ENCODE measurements at regions of chr15 and their contacts with region 1.

Region 1: GRCh38 chr15:41557673-41558399 is 1.2 kb upstream of the TYRO3 start:
- DNase-seq: peak; percentile 76 to 87
- ATAC-seq: peak; percentile 84 to 92 (median 90)
- H3K4me3 ChIP-seq: no peak overlapping the region
- H3K4me3 Mint-ChIP-seq: peak overlapping the region; percentile 94
- H3K27ac ChIP-seq: peak overlapping the region; percentile 10
- H3K27ac Mint-ChIP-seq: peak overlapping the region; percentile 90 to 95
- H3K4me1 ChIP-seq: peaks cover 21% of the 10 kb centered on the region
- H3K4me1 Mint-ChIP-seq: peaks cover 11 to 26% of the 10 kb centered on the region in 2 donors
- H3K27me3 ChIP-seq: peaks cover 23% of the 10 kb centered on the region
- H3K27me3 Mint-ChIP-seq: peaks cover 0 to 26% of the 10 kb centered on the region in 2 donors
- CTCF ChIP-seq: peak; percentile 97

Region 2: DNA sequence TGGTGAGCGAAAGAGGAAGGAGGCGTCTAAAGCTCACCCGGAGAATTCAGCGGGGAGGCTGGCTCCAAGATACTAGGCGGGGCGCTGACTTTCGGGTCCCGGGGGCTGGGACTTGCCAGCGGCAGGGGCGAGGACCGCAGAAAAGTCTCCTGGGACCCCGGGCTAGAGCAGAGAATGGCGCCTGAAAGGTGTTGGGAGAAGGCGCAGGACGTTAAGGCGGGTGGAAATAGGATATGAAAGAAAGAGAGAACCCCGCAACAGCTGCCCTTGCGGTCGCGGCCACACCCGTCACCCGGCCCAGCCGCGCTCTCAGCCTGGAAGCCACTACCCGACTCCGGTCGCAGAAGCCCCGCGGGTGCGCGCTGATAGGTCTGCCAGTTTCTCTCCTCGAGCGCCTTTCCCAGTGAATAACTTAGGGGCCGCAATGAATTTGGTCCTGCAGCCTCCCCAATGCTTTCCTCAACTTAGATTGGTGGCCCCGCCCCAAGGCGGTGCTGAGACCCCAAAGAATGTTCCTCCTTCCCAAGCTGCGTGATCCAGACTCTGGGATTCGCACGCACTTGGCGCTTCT is 44.8 kb before region 1 on chr15:
- intact Hi-C with region 1: no loop called
- DNase-seq: peak; percentile 34 to 58
- ATAC-seq: peak; percentile 27 to 59 (median 46)
- H3K4me3 ChIP-seq: peak overlapping the region; percentile 27
- H3K4me3 Mint-ChIP-seq: peak overlapping the region; percentile 86
- H3K27ac ChIP-seq: no peak overlapping the region
- H3K27ac Mint-ChIP-seq: peak overlapping the region in 1 of 2 donors; percentile 66
- H3K4me1 ChIP-seq: peaks cover 34% of the 10 kb centered on the region
- H3K4me1 Mint-ChIP-seq: peaks cover 25 to 26% of the 10 kb centered on the region in 2 donors
- H3K27me3 ChIP-seq: peaks cover 16% of the 10 kb centered on the region
- H3K27me3 Mint-ChIP-seq: peaks cover 0 to 19% of the 10 kb centered on the region in 2 donors
- CTCF ChIP-seq: no peak

Region 3: GRCh38 chr15:41523097-41523496 is 34.7 kb before region 1 on chr15:
- intact Hi-C with region 1: no loop called
- DNase-seq: no peak
- ATAC-seq: no peak
- H3K4me3 ChIP-seq: no peak overlapping the region
- H3K4me3 Mint-ChIP-seq: no peak overlapping the region
- H3K27ac ChIP-seq: no peak overlapping the region
- H3K27ac Mint-ChIP-seq: no peak overlapping the region
- H3K4me1 ChIP-seq: no peaks in the 10 kb centered on the region
- H3K4me1 Mint-ChIP-seq: no peaks in the 10 kb centered on the region
- H3K27me3 ChIP-seq: no peaks in the 10 kb centered on the region
- H3K27me3 Mint-ChIP-seq: no peaks in the 10 kb centered on the region
- CTCF ChIP-seq: no peak

Region 4: DNA sequence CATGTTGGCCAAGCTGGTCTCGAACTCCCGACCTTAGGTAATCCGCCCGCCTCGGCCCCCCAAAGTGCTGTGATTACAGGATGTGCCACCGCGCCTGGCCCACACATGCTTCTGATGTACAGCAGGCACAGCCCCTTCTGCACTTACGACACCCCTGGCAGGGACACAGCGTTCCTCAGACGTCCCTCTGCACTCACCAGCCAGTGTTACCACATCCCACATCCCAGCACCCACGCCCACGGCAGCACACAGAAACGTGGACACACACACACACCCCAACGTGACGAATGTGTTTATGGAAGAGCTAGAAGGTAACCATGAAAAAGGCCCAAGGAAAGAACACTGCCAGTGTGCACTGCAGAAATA is 13.2 kb before region 1 on chr15:
- intact Hi-C with region 1: loop called (anchors 1 kb)
- DNase-seq: peak in 1 of 2 donors; percentile 45
- ATAC-seq: no peak
- H3K4me3 ChIP-seq: peak overlapping the region; percentile 80
- H3K4me3 Mint-ChIP-seq: peak overlapping the region; percentile 91
- H3K27ac ChIP-seq: peak overlapping the region; percentile 45
- H3K27ac Mint-ChIP-seq: peak overlapping the region; percentile 82 to 89
- H3K4me1 ChIP-seq: peaks cover 15% of the 10 kb centered on the region
- H3K4me1 Mint-ChIP-seq: peaks cover 16 to 18% of the 10 kb centered on the region in 2 donors
- H3K27me3 ChIP-seq: no peaks in the 10 kb centered on the region
- H3K27me3 Mint-ChIP-seq: no peaks in the 10 kb centered on the region
- CTCF ChIP-seq: no peak

Region 5: DNA sequence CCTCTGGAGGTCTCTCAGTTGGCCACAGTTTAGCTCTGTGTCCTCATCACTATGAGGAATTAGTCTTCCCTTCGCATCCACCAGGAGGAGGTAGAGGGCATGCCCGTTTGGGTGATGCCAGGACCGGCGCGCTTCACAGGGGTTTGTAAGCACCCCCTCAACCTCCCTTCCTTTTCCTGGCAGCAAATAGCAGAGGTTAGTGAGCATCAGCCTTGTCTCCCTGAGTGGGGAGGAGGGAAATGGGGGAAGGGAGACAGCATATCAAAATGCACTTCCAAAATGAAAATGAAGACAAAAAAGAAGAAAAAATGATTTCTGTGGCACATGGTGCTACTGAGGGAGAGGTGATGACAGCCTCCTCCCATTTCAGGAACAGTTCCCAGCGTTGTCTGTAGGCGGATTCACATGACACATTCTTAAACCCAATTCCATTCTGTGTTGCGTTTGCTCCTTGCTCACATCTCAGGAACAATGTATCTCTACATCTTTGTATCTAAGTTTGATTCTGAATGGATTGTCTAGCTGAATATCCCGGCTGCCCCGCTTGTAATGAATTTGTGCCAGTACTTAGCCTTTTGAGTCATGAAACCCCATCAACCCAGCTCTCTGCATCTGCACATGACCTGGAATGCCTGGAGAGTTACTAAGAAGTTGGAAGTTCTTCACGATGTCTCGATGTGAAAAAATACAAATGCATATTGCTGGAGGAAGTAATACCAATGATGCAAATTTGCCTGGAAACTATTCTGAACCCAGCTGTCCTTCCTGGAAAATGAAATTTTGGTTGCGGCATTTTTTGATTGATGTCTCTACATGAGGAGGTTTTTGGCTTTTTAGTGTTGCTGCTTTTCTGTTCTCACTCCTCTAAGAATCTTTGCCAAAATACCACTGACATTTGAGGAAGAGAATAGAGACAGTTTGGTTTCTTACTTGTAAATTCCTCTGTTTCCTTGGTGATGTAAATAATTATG is 46.4 kb after region 1 on chr15:
- intact Hi-C with region 1: loop called (anchors 5 kb)
- DNase-seq: peak; percentile 30 to 79
- ATAC-seq: peak; percentile 80 to 96 (median 85)
- H3K4me3 ChIP-seq: no peak overlapping the region
- H3K4me3 Mint-ChIP-seq: no peak overlapping the region
- H3K27ac ChIP-seq: no peak overlapping the region
- H3K27ac Mint-ChIP-seq: no peak overlapping the region
- H3K4me1 ChIP-seq: peaks cover 7% of the 10 kb centered on the region
- H3K4me1 Mint-ChIP-seq: peaks cover 7 to 10% of the 10 kb centered on the region in 2 donors
- H3K27me3 ChIP-seq: no peaks in the 10 kb centered on the region
- H3K27me3 Mint-ChIP-seq: peaks cover 24 to 35% of the 10 kb centered on the region in 2 donors
- CTCF ChIP-seq: peak; percentile 66